Activated T-helper 2 cell treated with anti-CD3 and anti-CD28 coated beads, Interferon-gamma antibody, Interleukin-2, Interleukin-4, amounts not matched to agents 10 μg/mL and 5 μg/mL and 100 μg/mL, durations not matched to agents 14 hours and 24 hours and 36 hours (primary cell): ENCODE measurements at regions of chr20 and their contacts with region 1.

Region 1: DNA sequence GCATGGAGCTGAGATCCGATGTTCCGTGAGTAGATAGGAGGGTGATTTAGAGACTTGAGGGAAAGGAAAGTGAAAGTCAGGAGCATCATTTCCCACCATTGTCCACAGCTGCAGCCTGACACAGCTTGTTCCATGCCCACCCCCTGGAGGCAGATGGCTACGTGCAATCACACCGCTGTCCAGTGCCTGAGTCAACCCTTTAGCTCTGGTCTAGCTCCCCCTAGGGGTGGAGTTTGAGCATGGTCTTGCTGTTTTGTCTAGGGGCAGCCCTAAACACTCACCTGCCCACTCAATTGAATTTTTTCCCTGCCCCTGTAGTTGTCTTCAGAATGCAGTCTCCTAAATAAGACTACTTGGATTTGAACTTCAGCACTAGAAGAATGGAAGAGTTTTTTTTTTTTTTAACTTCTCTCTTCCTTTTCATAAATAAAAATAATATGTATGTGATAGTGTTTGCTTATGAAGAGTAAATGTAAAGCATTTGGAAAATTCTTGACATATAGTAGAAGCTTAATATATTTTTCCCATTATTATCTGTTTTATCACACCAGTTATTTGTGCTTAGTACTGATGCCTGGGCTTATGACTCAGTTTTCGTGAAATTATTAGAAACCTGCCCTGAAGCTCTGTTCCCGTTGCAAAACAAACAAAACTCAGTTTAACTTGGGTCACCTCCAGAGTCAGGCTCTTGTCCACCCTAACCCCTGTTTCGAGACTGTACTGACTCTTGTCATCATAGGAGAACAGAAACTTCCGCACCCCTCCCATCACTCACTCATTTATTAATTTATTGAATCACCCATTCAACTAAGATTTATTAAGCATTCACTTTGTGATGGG is 814.8 kb downstream of the MAFB start:
- DNase-seq: peak; percentile 9
- H3K4me3 Mint-ChIP-seq: no peak overlapping the region
- H3K27ac Mint-ChIP-seq: no peak overlapping the region
- H3K4me1 Mint-ChIP-seq: no peaks in the 10 kb centered on the region
- H3K27me3 Mint-ChIP-seq: no peaks in the 10 kb centered on the region

Region 2: DNA sequence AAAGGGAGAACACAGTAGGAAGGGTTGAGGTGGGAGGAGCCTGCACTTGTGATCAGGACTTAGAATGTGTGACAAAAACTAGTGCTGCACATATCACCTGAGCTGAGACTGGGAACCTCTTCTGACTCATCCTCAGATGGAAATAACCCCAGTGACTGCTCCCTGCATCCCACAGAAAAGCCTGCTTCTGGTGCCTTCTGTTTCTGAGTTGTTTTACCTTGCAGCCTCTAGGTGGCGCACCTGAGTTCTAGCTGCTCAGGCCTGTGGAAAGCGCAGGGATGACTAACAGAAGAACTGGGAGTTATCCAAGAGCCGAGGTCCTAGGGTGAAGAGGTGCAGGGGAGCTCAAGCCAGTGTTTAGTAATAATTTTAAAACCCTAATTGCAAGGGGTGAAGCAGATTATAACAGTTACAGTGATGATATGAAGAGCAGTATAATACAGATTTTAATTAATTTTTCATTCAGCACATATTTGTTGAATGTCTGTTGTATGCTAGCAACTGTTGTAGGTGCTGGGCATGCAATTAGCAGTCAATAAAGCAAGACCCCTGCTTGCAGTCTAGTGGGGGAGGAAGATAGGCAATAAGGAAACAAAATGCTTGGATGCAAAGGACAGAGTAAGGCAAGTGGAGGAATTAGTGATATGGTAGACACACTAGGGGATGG is 609.6 kb before region 1 on chr20:
- intact Hi-C with region 1: loop called (anchors 10 kb)
- DNase-seq: no peak
- H3K4me3 Mint-ChIP-seq: no peak overlapping the region
- H3K27ac Mint-ChIP-seq: no peak overlapping the region
- H3K4me1 Mint-ChIP-seq: no peaks in the 10 kb centered on the region
- H3K27me3 Mint-ChIP-seq: no peaks in the 10 kb centered on the region

Region 3: DNA sequence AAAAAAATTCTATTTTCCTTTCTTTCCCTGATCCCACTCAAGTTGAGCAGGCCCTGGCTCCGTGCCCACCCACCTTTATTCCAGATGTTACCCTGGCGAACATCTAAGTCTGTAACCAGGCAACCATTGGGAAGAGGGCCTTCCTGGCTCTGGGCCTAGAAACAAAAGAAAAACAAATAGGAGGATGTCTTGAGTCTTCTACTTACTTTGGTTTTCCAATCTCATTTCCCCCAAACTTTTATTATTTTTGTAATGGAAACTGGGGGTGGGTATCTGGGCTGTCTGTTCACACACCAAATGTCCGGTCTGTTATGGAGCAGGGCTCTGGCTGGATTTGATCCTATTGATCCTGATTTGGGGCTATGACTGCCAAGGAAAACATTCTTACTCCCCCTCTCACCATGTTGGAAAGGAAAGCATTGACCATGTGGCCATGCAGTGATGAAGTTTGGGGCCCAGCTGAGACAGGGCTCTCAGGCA is 168.0 kb before region 1 on chr20:
- intact Hi-C with region 1: no loop called
- DNase-seq: no peak
- H3K4me3 Mint-ChIP-seq: no peak overlapping the region
- H3K27ac Mint-ChIP-seq: no peak overlapping the region
- H3K4me1 Mint-ChIP-seq: no peaks in the 10 kb centered on the region
- H3K27me3 Mint-ChIP-seq: no peaks in the 10 kb centered on the region

Region 4: GRCh38 chr20:39745380-39745779 is 128.9 kb before region 1 on chr20:
- intact Hi-C with region 1: no loop called
- DNase-seq: no peak
- H3K4me3 Mint-ChIP-seq: no peak overlapping the region
- H3K27ac Mint-ChIP-seq: no peak overlapping the region
- H3K4me1 Mint-ChIP-seq: no peaks in the 10 kb centered on the region
- H3K27me3 Mint-ChIP-seq: no peaks in the 10 kb centered on the region

Region 5: GRCh38 chr20:40010483-40010882 is 136.2 kb after region 1 on chr20:
- intact Hi-C with region 1: no loop called
- DNase-seq: no peak
- H3K4me3 Mint-ChIP-seq: no peak overlapping the region
- H3K27ac Mint-ChIP-seq: no peak overlapping the region
- H3K4me1 Mint-ChIP-seq: no peaks in the 10 kb centered on the region
- H3K27me3 Mint-ChIP-seq: no peaks in the 10 kb centered on the region

Region 6: GRCh38 chr20:40197691-40198090 is 323.4 kb after region 1 on chr20:
- intact Hi-C with region 1: no loop called
- DNase-seq: no peak
- H3K4me3 Mint-ChIP-seq: no peak overlapping the region
- H3K27ac Mint-ChIP-seq: no peak overlapping the region
- H3K4me1 Mint-ChIP-seq: no peaks in the 10 kb centered on the region
- H3K27me3 Mint-ChIP-seq: no peaks in the 10 kb centered on the region